ENCODE measurements at regions of chr2 and their contacts with region 1.

Region 1: DNA sequence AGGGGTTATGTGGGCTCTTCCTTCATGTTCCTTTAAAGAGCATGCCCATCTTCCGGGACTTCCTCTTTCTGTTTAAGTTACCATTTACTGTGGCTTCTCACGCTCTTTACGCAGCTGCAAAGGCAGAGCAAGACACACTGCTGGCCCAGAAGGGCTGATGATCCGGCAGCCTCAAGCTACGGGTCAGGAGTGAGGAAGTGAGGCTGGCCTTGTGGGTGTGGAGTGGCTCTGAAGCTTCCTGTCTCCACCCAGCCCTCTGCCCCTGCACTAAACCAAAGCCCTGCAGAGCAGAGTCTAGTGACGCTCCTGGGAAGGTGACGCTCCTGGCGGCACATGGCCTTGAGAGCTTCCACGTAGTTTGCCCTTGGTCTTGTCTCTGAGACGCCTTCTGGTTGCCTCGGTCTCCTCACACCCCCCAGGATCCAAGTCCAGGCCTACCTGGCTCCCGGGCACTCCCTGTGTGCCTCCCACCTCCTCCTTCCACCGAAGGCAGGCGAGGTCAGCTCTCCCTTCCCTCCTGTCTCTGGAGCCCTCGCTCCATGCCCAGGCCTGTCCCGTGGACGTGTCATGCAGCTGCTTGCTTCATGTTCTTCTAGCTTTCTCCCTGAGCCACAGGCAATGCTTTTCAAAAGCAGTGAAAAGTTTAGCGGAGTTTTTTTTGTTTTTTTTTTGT is 50.3 kb downstream of the ARL4C start:
- DNase-seq: peak; percentile 95
- ATAC-seq: peak; percentile 93
- H3K4me3 ChIP-seq: peak overlapping the region in 1 of 5 experiments; percentile 11
- H3K4me3 Mint-ChIP-seq: peak overlapping the region; percentile 84
- H3K27ac ChIP-seq: peak overlapping the region; percentile 95 to 98
- H3K27ac Mint-ChIP-seq: peak overlapping the region; percentile 96
- H3K4me1 ChIP-seq: peaks cover 69 to 80% of the 10 kb centered on the region in 2 donors
- H3K4me1 Mint-ChIP-seq: peaks cover 78% of the 10 kb centered on the region
- H3K27me3 ChIP-seq: no peaks in the 10 kb centered on the region
- H3K27me3 Mint-ChIP-seq: no peaks in the 10 kb centered on the region
- CTCF ChIP-seq: no peak

Region 2: DNA sequence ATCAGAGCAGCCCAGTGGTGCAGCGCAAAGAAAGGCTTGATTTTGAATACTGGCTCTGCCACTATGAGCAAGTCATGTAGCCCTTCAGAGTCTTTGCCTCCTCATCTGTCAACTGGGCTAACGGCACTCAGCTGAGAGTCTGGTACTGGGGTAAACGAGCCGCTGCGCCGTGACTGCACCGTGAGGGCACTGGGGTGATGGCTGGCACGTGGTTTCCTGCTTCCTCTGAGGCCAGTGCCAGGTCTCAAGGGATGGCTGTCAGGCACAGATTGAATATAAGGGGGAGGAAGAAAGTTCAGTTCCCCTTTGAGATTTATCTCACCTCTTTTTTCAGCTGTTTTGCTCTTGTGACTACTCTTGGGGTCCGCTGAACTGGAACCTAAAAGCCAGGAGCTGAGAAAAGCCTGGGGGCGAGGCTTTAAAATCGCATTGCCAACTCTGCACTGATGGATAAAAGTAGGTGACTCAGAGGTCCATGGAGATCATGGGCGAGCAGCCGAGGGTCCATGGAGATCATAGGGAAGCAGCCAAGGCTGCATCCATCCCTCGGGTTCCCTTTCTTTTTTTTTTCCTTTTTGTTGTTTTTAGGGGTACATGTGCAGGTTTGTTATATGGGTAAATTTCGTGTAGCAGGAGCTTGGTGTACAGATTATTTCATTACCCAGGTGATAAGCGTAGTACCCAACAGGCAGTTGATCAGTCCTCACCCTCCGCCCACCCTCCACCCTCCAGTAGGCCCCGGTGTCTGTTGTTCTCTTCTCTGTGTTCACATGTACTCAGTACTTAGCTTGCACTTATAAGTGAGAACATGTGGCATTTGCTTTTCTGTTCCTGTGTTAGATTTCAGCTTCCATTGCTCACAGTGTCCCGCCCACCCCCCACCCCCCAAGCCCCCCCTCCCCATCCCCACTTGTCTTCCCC is 281.8 kb before region 1 on chr2:
- CTCF ChIA-PET with region 1: interaction called, 3 read pairs
- POLR2A ChIA-PET with region 1: no interaction called
- intact Hi-C with region 1: loop called (anchors 1 kb)
- DNase-seq: peak; percentile 94
- ATAC-seq: peak; percentile 96
- H3K4me3 ChIP-seq: peak overlapping the region in 2 of 5 experiments; percentile 11 to 40
- H3K4me3 Mint-ChIP-seq: peak overlapping the region; percentile 71
- H3K27ac ChIP-seq: peak overlapping the region; percentile 87 to 88
- H3K27ac Mint-ChIP-seq: peak overlapping the region; percentile 89
- H3K4me1 ChIP-seq: peaks cover 45 to 54% of the 10 kb centered on the region in 2 donors
- H3K4me1 Mint-ChIP-seq: peaks cover 55% of the 10 kb centered on the region
- H3K27me3 ChIP-seq: peaks cover 0 to 8% (median 2%) of the 10 kb centered on the region in 4 experiments
- H3K27me3 Mint-ChIP-seq: peaks cover 9% of the 10 kb centered on the region
- CTCF ChIP-seq: no peak

Region 3: DNA sequence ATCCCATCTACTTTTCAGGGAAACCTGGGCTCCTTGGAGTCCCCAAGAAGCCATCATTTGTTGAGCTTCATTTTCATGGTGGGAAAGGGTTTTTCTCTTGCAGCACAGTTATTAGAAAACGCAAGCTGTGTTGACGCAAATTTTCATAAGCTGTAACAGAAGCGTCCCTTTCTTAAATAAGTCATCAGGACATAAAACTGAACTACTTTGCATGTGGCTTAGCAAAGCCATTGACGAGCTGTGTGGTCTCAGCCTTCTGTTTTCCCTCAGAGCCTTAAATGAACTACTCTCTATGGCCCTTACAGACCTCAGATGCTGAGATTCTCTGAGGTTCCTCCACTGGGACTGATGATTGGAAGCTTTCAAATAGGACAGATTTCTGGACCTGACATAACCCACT is 34.7 kb before region 1 on chr2:
- CTCF ChIA-PET with region 1: interaction called, 3 read pairs
- POLR2A ChIA-PET with region 1: no interaction called
- intact Hi-C with region 1: loop called (anchors 5 kb)
- DNase-seq: peak; percentile 64
- ATAC-seq: peak; percentile 79
- H3K4me3 ChIP-seq: peak overlapping the region in 1 of 5 experiments; percentile 8
- H3K4me3 Mint-ChIP-seq: peak overlapping the region; percentile 23
- H3K27ac ChIP-seq: no peak overlapping the region
- H3K27ac Mint-ChIP-seq: peak overlapping the region; percentile 38
- H3K4me1 ChIP-seq: peaks cover 40 to 42% of the 10 kb centered on the region in 2 donors
- H3K4me1 Mint-ChIP-seq: peaks cover 54% of the 10 kb centered on the region
- H3K27me3 ChIP-seq: no peaks in the 10 kb centered on the region
- H3K27me3 Mint-ChIP-seq: no peaks in the 10 kb centered on the region
- CTCF ChIP-seq: no peak

Region 4: GRCh38 chr2:234425619-234426603 is 20.6 kb before region 1 on chr2:
- CTCF ChIA-PET with region 1: interaction called, 9 read pairs
- POLR2A ChIA-PET with region 1: interaction called, 35 read pairs
- intact Hi-C with region 1: loop called (anchors 1 kb)
- DNase-seq: peak; percentile 94
- ATAC-seq: peak; percentile 92
- H3K4me3 ChIP-seq: peak overlapping the region in 2 of 5 experiments; percentile 5 to 37
- H3K4me3 Mint-ChIP-seq: peak overlapping the region; percentile 69
- H3K27ac ChIP-seq: peak overlapping the region; percentile 87
- H3K27ac Mint-ChIP-seq: peak overlapping the region; percentile 95
- H3K4me1 ChIP-seq: peaks cover 79 to 85% of the 10 kb centered on the region in 2 donors
- H3K4me1 Mint-ChIP-seq: peaks cover 73% of the 10 kb centered on the region
- H3K27me3 ChIP-seq: no peaks in the 10 kb centered on the region
- H3K27me3 Mint-ChIP-seq: no peaks in the 10 kb centered on the region
- CTCF ChIP-seq: no peak

Region 5: GRCh38 chr2:234483568-234484251 is 37.2 kb after region 1 on chr2:
- CTCF ChIA-PET with region 1: interaction called, 5 read pairs
- POLR2A ChIA-PET with region 1: no interaction called
- intact Hi-C with region 1: loop called (anchors 1 kb)
- DNase-seq: peak; percentile 90
- ATAC-seq: peak; percentile 87
- H3K4me3 ChIP-seq: peak overlapping the region in 1 of 5 experiments; percentile 27
- H3K4me3 Mint-ChIP-seq: peak overlapping the region; percentile 61
- H3K27ac ChIP-seq: peak overlapping the region; percentile 48 to 59
- H3K27ac Mint-ChIP-seq: peak overlapping the region; percentile 33
- H3K4me1 ChIP-seq: peaks cover 45 to 50% of the 10 kb centered on the region in 2 donors
- H3K4me1 Mint-ChIP-seq: peaks cover 41% of the 10 kb centered on the region
- H3K27me3 ChIP-seq: peaks cover 0 to 4% (median 0%) of the 10 kb centered on the region in 4 experiments
- H3K27me3 Mint-ChIP-seq: no peaks in the 10 kb centered on the region
- CTCF ChIP-seq: peak; percentile 71

Measured in B cell (primary cell).